GM23248 (cell line): ENCODE measurements at regions of chr2 and their contacts with region 1.

Region 1: GRCh38 chr2:151032741-151033191 is 228.9 kb downstream of the RBM43 start:
- DNase-seq: peak; percentile 93
- H3K4me3 ChIP-seq: no peak overlapping the region
- H3K27ac ChIP-seq: no peak overlapping the region
- H3K4me1 ChIP-seq: peaks cover 34% of the 10 kb centered on the region
- H3K27me3 ChIP-seq: no peaks in the 10 kb centered on the region

Region 2: DNA sequence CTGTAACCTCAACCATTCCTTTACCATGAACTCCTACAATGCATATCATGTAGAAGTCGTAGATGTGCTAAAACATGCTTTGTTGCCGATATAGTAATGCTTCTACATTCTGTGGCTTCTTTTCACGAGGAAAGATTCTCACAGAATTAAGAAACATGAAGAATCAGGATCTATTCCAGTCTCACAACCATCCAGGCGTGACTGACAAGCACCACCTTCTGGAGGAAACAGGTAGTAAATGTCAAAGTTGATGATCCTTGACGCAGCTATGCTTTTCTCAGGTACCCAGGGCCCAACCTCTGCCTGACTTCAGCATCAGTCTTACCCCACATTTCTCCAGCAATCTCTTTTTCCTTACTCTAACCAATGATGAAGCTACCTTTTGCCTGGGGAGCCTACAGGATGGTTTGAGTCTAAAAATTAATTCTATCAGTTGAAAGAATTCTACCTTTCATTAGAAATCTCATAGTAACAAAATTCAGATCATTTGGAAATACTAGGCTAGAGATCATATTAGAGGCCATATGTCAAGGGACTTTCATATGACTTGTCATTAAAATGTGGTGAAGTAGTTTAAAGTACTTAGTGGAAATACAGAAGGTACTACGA is 422.0 kb before region 1 on chr2:
- in situ Hi-C with region 1: loop called (anchors 25 kb)
- DNase-seq: peak; percentile 74
- H3K4me3 ChIP-seq: peak overlapping the region; percentile 19
- H3K27ac ChIP-seq: peak overlapping the region; percentile 60
- H3K4me1 ChIP-seq: peaks cover 55% of the 10 kb centered on the region
- H3K27me3 ChIP-seq: no peaks in the 10 kb centered on the region